Mammary epithelial cell (primary cell): ENCODE measurements at regions of chr2 and their contacts with region 1.

Region 1: GRCh38 chr2:207473049-207473930 is 56.5 kb upstream of the CREB1 start:
- DNase-seq: peak; percentile 68
- H3K4me3 ChIP-seq: no peak overlapping the region
- H3K27ac ChIP-seq: peak overlapping the region; percentile 20
- H3K4me1 ChIP-seq: peaks cover 24% of the 10 kb centered on the region
- H3K27me3 ChIP-seq: no peaks in the 10 kb centered on the region
- CTCF ChIP-seq: peak; percentile 87 to 88

Region 2: GRCh38 chr2:206783718-206784117 is 689.6 kb before region 1 on chr2:
- CTCF ChIA-PET with region 1: no interaction called
- dilution Hi-C with region 1: no loop called
- in situ Hi-C with region 1: no loop called
- intact Hi-C with region 1: loop called (anchors 5 kb)
- DNase-seq: no peak
- H3K4me3 ChIP-seq: no peak overlapping the region
- H3K27ac ChIP-seq: no peak overlapping the region
- H3K4me1 ChIP-seq: no peaks in the 10 kb centered on the region
- H3K27me3 ChIP-seq: no peaks in the 10 kb centered on the region
- CTCF ChIP-seq: peak; percentile 55 to 59

Region 3: DNA sequence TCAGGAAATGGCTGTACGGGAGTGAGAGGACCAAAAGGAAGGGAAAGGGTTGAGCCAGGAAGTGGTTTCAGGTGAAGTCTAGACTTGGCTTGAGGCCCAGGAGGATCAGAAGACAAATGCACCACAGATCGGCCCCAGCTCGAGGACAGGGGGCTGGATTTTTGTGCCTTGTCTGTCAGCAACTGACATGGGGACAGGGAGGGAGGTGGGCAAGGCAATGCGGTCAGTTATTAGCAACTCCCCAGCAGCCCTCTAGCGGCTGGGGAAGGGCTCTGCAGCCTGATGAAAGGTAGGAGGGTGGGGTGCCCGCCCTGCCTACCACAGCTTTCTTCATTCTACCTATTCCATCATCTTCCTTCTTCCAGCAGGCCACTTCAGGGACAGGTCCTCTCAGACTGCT is 484.0 kb before region 1 on chr2:
- CTCF ChIA-PET with region 1: no interaction called
- dilution Hi-C with region 1: no loop called
- in situ Hi-C with region 1: loop called (anchors 5 kb)
- intact Hi-C with region 1: no loop called
- DNase-seq: no peak
- H3K4me3 ChIP-seq: no peak overlapping the region
- H3K27ac ChIP-seq: no peak overlapping the region
- H3K4me1 ChIP-seq: no peaks in the 10 kb centered on the region
- H3K27me3 ChIP-seq: no peaks in the 10 kb centered on the region
- CTCF ChIP-seq: peak; percentile 65 to 66

Region 4: DNA sequence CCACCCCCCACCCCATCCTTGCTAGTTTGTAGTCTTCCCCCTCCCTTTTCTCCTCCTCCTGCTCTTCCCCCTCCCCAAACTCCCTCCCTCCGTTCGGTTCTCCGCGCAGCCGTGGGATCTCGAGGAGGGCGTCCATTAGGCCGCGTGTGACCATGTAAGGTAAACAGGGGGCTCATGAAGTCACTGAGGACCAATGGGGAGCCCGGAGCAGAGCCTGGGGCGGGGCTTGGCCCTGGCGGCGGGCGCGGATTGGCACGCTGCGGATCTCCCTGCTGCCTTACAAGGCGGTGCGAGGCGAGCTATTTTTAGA is 307.3 kb before region 1 on chr2:
- CTCF ChIA-PET with region 1: interaction called, 4 read pairs
- dilution Hi-C with region 1: no loop called
- in situ Hi-C with region 1: loop called (anchors 25 kb)
- intact Hi-C with region 1: loop called (anchors 1 kb)
- DNase-seq: peak; percentile 100
- H3K4me3 ChIP-seq: peak overlapping the region; percentile 55 to 71 (median 62)
- H3K27ac ChIP-seq: peak overlapping the region; percentile 93
- H3K4me1 ChIP-seq: peaks cover 24% of the 10 kb centered on the region
- H3K27me3 ChIP-seq: no peaks in the 10 kb centered on the region
- CTCF ChIP-seq: no peak

Region 5: GRCh38 chr2:207334624-207335371 is 138.5 kb before region 1 on chr2:
- CTCF ChIA-PET with region 1: no interaction called
- dilution Hi-C with region 1: no loop called
- in situ Hi-C with region 1: no loop called
- intact Hi-C with region 1: loop called (anchors 1 kb)
- DNase-seq: peak; percentile 99
- H3K4me3 ChIP-seq: peak overlapping the region; percentile 3 to 26 (median 20)
- H3K27ac ChIP-seq: peak overlapping the region; percentile 99
- H3K4me1 ChIP-seq: peaks cover 87% of the 10 kb centered on the region
- H3K27me3 ChIP-seq: no peaks in the 10 kb centered on the region
- CTCF ChIP-seq: no peak